HEK293 (cell line): ENCODE measurements at regions of chr5 and their contacts with region 1.

Region 1: GRCh38 chr5:147751156-147751825 is 31.2 kb downstream of the JAKMIP2 start:
- H3K4me3 ChIP-seq: no peak overlapping the region
- H3K27ac ChIP-seq: no peak overlapping the region
- H3K4me1 ChIP-seq: peaks cover 36% of the 10 kb centered on the region
- CTCF ChIP-seq: no peak

Region 2: DNA sequence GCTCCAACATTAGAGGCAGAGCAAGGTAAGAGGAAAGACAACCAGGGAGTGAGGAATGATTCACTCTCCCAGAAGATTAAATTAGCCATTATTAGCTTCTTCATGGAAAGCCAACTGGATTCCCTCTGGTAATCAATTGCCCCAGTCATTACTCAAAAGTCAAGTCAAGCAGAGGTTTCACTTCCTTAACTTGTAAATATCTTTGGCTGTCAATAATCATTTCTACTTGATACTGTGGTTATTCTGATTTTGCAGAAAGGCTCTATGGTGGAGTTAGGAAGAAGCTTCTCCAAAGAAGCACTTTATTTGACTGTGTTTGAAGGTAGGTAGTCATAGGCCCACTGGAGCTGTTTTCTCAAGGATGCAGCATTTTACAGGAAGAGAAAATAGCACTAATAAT is 46.7 kb before region 1 on chr5:
- CTCF ChIA-PET with region 1: no interaction called
- POLR2A ChIA-PET with region 1: no interaction called
- H3K4me3 ChIP-seq: no peak overlapping the region
- H3K27ac ChIP-seq: no peak overlapping the region
- H3K4me1 ChIP-seq: no peaks in the 10 kb centered on the region; the same call in 1 of the 2 replicates
- CTCF ChIP-seq: no peak

Region 3: GRCh38 chr5:147763791-147764525 is 12.7 kb after region 1 on chr5:
- CTCF ChIA-PET with region 1: no interaction called
- POLR2A ChIA-PET with region 1: no interaction called
- H3K4me3 ChIP-seq: no peak overlapping the region
- H3K27ac ChIP-seq: no peak overlapping the region
- H3K4me1 ChIP-seq: peaks cover 6% of the 10 kb centered on the region; the same call in 1 of the 2 replicates
- CTCF ChIP-seq: no peak

Region 4: GRCh38 chr5:148606296-148606695 is 855.0 kb after region 1 on chr5:
- CTCF ChIA-PET with region 1: no interaction called
- POLR2A ChIA-PET with region 1: interaction called, 10 read pairs
- H3K4me3 ChIP-seq: no peak overlapping the region
- H3K27ac ChIP-seq: no peak overlapping the region
- H3K4me1 ChIP-seq: no peaks in the 10 kb centered on the region
- CTCF ChIP-seq: no peak